ENCODE measurements at regions of chr4 and their contacts with region 1.

Region 1: DNA sequence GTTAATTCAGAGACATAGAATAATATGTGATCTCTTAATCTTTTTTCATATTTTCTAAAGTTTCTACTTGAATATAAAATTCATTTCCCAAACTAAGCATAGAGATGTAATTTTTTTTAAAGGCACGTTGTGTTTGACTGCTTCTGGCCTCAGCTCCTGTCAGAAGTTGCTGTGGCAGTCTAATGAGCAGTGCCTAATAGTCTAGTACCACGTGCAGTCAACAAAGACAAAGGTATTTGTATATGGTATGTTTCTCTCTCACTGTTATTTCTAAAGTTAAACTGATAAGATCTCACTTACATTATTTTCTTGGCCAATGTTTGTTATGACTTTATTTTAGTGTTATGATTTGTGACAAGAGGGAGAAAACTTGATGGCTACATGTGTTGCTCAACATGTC is 48.6 kb upstream of the MCUB start:
- DNase-seq: no peak
- ATAC-seq: no peak
- H3K4me3 Mint-ChIP-seq: no peak overlapping the region
- H3K27ac Mint-ChIP-seq: no peak overlapping the region
- H3K4me1 Mint-ChIP-seq: no peaks in the 10 kb centered on the region
- H3K27me3 Mint-ChIP-seq: no peaks in the 10 kb centered on the region
- CTCF ChIP-seq: no peak

Region 2: DNA sequence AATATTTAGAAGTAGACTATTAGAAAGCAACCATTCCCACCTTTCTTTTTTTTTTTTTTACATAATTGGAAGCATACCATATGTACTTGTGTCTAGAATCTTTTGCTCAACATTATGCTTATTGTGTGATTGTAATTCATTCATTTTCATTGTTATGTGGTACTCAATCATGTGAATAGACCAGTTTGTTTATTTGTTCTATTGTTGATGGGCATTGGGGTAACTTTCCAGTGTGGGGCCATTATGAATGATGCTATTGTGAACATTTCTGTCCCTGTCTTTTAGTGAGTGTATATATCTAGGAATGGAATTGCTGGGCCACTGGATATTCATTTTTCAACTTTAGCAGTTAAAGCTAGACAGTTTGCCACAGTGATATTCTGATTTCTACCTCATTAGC is 13.9 kb before region 1 on chr4:
- CTCF ChIA-PET with region 1: no interaction called
- POLR2A ChIA-PET with region 1: interaction called, 3 read pairs
- intact Hi-C with region 1: loop called (anchors 2 kb)
- DNase-seq: no peak
- ATAC-seq: no peak
- H3K4me3 Mint-ChIP-seq: no peak overlapping the region
- H3K27ac Mint-ChIP-seq: no peak overlapping the region
- H3K4me1 Mint-ChIP-seq: no peaks in the 10 kb centered on the region
- H3K27me3 Mint-ChIP-seq: no peaks in the 10 kb centered on the region
- CTCF ChIP-seq: no peak

Measured in activated B cell treated with CpG ODN at 0.5 μM for 24 hours (primary cell).